ENCODE measurements at regions of chr16 and their contacts with region 1.

Region 1: GRCh38 chr16:50806099-50807062 is 64.5 kb downstream of the CYLD start:
- DNase-seq: peak; percentile 94
- H3K4me3 Mint-ChIP-seq: peak overlapping the region; percentile 74
- H3K27ac Mint-ChIP-seq: peak overlapping the region; percentile 51
- H3K4me1 Mint-ChIP-seq: peaks cover 10% of the 10 kb centered on the region
- H3K27me3 Mint-ChIP-seq: no peaks in the 10 kb centered on the region

Region 2: DNA sequence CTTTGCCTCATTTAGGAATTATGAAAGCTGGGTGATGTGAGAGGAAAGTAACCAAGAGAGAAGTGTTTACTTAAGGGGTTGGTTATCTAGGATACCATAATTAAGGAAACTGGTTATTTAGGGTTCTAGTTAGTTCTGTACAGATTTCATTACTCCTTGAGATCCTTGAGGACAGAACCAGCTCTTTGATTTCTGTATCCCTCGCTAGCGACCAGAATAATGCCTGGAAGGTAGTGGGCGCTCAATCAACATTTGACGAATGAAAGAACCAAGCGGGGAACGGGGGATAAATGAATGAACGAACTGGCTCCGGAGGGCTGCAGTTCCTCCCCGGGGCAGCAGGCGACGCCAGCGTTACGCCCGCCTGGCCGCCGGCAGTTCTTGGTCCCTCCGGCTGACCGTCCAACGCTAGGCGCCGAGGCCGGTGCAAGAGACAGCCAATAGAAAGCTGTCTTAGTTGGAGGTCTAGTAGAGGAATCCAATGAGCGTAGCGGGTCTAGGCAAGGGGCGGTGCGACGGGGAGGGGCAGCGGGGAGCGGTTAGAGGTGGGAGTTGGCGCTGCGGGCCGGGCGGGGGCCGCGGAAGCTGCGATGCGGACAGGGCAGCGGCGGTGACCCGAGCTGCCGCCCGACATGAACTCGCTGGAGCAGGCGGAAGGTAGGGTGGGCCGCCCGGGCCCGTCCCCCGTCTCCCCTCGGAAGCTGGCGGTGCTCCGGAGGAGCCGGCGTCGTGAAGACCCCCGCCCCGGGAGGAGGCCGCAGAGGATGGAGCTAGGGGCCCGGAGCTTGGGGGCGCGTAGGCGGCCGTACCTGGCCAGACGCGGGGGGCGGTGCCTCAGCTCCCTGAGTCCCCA is 781.5 kb before region 1 on chr16 and contains the start of gene CNEP1R1:
- CTCF ChIA-PET with region 1: interaction called, 12 read pairs
- intact Hi-C with region 1: loop called (anchors 1 kb)
- DNase-seq: peak; percentile 94
- H3K4me3 Mint-ChIP-seq: peak within 1 kb of the TSS; percentile 91
- H3K27ac Mint-ChIP-seq: peak within 1 kb of the TSS; percentile 82
- H3K4me1 Mint-ChIP-seq: peaks cover 22% of the 10 kb centered on the region
- H3K27me3 Mint-ChIP-seq: no peaks in the 10 kb centered on the region
- total RNA-seq, gene CNEP1R1: 28.2 to 30.9 TPM

Region 3: DNA sequence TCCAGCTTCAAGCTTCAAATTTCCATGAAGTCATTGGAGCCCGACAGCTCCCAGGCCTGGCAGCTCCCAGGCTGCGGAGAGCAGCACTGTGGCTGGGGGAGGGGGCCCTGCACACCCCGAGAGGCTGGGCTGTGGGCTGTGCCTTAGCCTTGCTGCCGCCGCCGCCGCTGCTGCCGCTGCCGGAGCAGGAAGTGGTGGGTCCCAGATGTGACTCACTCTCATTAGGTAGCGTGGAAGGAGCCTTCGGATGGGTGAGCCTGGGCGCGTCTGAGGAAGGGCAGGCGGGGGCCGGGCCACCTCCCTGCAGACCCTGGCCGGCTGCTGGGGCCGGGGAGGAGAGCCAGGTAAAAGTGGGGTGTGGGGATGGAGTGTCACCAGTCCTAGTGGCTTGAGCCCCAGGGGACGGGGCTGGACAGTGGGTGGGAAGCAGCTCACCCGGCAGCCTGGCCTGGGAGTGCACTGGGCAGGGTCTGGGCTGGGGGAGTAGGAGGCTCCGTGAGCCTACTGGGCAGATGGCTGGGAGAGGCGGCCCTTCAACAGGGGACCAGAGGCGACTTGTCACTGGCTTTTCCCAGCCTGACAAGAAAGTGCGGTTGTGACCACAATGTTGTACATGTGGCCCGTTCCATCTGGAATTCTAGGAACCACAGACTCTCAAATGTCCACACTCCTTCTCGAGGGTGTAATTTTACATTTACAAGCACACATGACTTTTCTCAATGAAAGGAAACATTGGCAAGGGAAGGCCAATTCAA is 539.9 kb before region 1 on chr16 and contains the start of gene ADCY7:
- CTCF ChIA-PET with region 1: no interaction called
- intact Hi-C with region 1: loop called (anchors 1 kb)
- DNase-seq: peak; percentile 91
- H3K4me3 Mint-ChIP-seq: peak within 1 kb of the TSS; percentile 86
- H3K27ac Mint-ChIP-seq: peak within 1 kb of the TSS; percentile 94
- H3K4me1 Mint-ChIP-seq: peaks cover 60% of the 10 kb centered on the region
- H3K27me3 Mint-ChIP-seq: peaks cover 3% of the 10 kb centered on the region
- total RNA-seq, gene ADCY7: 73.4 to 89.6 TPM

Region 4: GRCh38 chr16:50473356-50473945 is 332.9 kb before region 1 on chr16:
- CTCF ChIA-PET with region 1: interaction called, 4 read pairs
- intact Hi-C with region 1: loop called (anchors 1 kb)
- DNase-seq: peak; percentile 66
- H3K4me3 Mint-ChIP-seq: no peak overlapping the region
- H3K27ac Mint-ChIP-seq: peak overlapping the region; percentile 51
- H3K4me1 Mint-ChIP-seq: peaks cover 23% of the 10 kb centered on the region
- H3K27me3 Mint-ChIP-seq: peaks cover 4% of the 10 kb centered on the region

Region 5: DNA sequence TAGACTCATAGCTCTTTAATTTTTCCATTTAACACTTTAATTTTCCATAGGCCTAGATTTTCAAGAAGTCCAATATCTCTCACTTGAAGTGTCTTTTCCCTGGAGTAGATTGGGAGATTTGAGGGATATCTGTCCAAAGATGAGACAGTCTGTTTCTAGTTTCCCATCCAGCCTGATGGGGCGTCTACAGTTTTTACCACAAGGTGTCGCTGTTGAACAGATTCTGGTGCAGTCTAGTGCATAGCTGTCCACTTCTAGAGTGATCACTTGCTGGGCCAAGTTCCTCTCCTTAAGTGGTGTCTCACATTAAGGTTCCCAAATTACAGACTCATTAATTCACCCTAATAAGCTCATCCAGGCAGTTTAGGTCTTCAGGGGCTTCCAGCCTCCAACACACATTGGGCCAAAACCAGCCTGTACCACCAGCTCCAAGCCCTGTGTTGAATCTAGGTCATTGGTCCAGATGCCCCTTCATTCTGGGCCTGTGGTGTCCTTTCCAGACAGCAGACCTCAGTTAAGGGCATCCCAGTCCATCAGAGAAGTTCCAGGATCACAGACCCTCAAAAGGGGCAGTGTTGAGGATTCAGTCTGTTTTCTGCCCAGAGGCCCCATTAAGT is 134.6 kb before region 1 on chr16:
- CTCF ChIA-PET with region 1: interaction called, 347 read pairs
- intact Hi-C with region 1: loop called (anchors 1 kb)
- DNase-seq: peak; percentile 82
- H3K4me3 Mint-ChIP-seq: no peak overlapping the region
- H3K27ac Mint-ChIP-seq: peak overlapping the region; percentile 84
- H3K4me1 Mint-ChIP-seq: peaks cover 29% of the 10 kb centered on the region
- H3K27me3 Mint-ChIP-seq: no peaks in the 10 kb centered on the region

Region 6: GRCh38 chr16:50747207-50747956 is 59.0 kb before region 1 on chr16:
- CTCF ChIA-PET with region 1: interaction called, 54 read pairs
- intact Hi-C with region 1: loop called (anchors 1 kb)
- DNase-seq: peak; percentile 27
- H3K4me3 Mint-ChIP-seq: peak overlapping the region; percentile 67
- H3K27ac Mint-ChIP-seq: peak overlapping the region; percentile 93
- H3K4me1 Mint-ChIP-seq: peaks cover 62% of the 10 kb centered on the region
- H3K27me3 Mint-ChIP-seq: no peaks in the 10 kb centered on the region